ENCODE measurements at regions of chr21 and their contacts with region 1.

Region 1: DNA sequence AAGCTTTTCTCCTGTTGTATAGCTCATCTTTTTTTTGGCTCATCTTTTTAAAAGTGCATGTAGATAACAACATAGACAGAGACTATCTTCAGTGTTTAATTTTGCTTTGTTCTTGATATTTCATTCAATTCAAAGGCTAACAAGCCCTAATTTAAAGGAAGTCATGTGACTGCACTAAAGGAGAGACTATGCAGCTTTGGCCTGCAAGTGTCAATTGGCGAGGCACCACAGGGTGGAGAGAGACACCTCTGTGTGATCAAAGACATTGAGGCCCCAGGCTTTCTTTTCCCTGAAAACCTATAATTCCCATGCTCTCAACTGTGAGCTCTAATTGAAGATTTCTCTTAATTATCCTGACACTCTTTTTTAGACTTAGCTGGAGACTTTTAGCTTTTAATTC is 53.6 kb downstream of the CHODL start:
- DNase-seq: peak; percentile 2
- H3K4me3 ChIP-seq: no peak overlapping the region
- H3K27ac ChIP-seq: no peak overlapping the region
- H3K4me1 ChIP-seq: no peaks in the 10 kb centered on the region
- CTCF ChIP-seq: no peak

Region 2: DNA sequence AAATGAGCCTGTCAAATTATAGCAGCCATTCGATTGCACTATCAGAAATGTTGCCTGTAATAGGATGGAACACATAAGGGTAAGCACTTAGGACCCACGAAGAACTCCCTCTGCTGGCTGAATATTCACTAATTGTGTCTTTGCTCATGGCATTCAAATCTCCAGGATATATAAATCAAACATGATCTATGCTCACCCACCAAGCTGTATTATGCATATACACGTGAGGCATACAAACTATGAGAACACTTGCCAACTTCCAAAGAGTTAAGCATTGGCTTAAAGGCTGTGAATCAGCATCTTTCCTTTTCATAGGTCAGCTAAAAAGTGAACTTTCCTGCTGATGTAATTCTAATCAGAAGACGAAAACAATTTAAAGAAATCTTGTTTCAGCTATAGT is 70.9 kb after region 1 on chr21:
- CTCF ChIA-PET with region 1: no interaction called
- POLR2A ChIA-PET with region 1: no interaction called
- intact Hi-C with region 1: loop called (anchors 5 kb)
- DNase-seq: peak; percentile 63
- H3K4me3 ChIP-seq: no peak overlapping the region
- H3K27ac ChIP-seq: no peak overlapping the region
- H3K4me1 ChIP-seq: peaks cover 14% of the 10 kb centered on the region
- CTCF ChIP-seq: peak; percentile 72

Region 3: DNA sequence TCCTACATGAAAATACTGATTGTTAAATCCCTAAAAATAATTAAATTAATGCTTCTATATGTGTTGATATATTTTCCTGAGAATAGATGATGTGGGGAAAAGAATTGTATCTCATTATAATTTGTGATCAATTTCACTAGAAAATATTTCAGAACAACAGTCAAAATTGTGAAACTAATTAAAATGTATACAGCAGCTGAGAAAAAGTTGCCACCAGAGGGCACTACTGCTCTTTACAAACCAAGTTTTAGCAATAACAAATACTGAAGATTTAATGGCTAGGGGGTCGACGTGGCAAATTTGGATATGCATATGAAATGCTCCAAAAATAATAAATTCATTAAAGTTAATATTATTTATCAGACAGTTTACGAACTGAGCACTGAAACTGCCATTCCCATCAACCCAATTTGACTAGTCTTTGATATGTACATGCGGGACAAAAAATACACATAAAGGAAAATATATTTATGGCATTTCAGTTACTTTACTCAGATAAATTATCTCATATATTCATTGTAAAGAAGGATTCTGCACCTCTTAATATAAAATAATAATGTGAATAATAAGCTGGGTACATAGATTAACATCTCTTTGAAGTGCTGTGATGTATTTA is 201.6 kb after region 1 on chr21:
- CTCF ChIA-PET with region 1: no interaction called
- POLR2A ChIA-PET with region 1: no interaction called
- intact Hi-C with region 1: loop called (anchors 10 kb)
- DNase-seq: peak; percentile 67
- H3K4me3 ChIP-seq: no peak overlapping the region
- H3K27ac ChIP-seq: no peak overlapping the region
- H3K4me1 ChIP-seq: no peaks in the 10 kb centered on the region
- CTCF ChIP-seq: peak; percentile 98